ENCODE measurements at regions of chr3 and their contacts with region 1.

Region 1: GRCh38 chr3:161274719-161275298 is 53.7 kb downstream of the NMD3 start:
- DNase-seq: peak; percentile 66
- H3K4me3 Mint-ChIP-seq: no peak overlapping the region
- H3K27ac Mint-ChIP-seq: no peak overlapping the region
- H3K4me1 Mint-ChIP-seq: no peaks in the 10 kb centered on the region
- H3K27me3 Mint-ChIP-seq: no peaks in the 10 kb centered on the region

Region 2: DNA sequence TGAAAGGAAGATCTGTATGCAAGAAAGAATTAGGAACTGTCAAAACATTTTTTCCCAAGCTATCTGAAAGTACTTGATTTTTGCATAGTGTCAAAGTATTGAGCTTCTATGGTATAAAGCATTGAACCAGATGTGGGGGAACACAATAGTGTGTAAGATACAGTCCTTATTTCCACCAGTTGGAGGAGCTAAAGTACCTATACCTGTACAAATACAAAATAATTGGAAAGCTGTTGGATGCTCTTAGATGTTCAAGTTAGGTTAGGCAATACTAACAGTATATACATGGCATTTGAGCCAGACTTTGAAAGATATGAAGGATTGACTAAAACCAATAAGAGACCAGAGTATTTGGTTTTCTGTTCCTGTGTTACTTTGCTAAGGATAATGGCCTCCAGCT is 318.0 kb before region 1 on chr3:
- CTCF ChIA-PET with region 1: interaction called, 6 read pairs
- intact Hi-C with region 1: loop called (anchors 1 kb)
- DNase-seq: no peak
- H3K4me3 Mint-ChIP-seq: no peak overlapping the region
- H3K27ac Mint-ChIP-seq: no peak overlapping the region
- H3K4me1 Mint-ChIP-seq: no peaks in the 10 kb centered on the region
- H3K27me3 Mint-ChIP-seq: no peaks in the 10 kb centered on the region

Region 3: GRCh38 chr3:161284989-161285388 is 10.2 kb after region 1 on chr3:
- CTCF ChIA-PET with region 1: interaction called, 11 read pairs
- intact Hi-C with region 1: no loop called
- DNase-seq: no peak
- H3K4me3 Mint-ChIP-seq: no peak overlapping the region
- H3K27ac Mint-ChIP-seq: no peak overlapping the region
- H3K4me1 Mint-ChIP-seq: no peaks in the 10 kb centered on the region
- H3K27me3 Mint-ChIP-seq: no peaks in the 10 kb centered on the region

Region 4: GRCh38 chr3:161409069-161409468 is 134.3 kb after region 1 on chr3:
- CTCF ChIA-PET with region 1: interaction called, 18 read pairs
- intact Hi-C with region 1: loop called (anchors 1 kb)
- DNase-seq: peak; percentile 63
- H3K4me3 Mint-ChIP-seq: no peak overlapping the region
- H3K27ac Mint-ChIP-seq: no peak overlapping the region
- H3K4me1 Mint-ChIP-seq: peaks cover 20% of the 10 kb centered on the region
- H3K27me3 Mint-ChIP-seq: no peaks in the 10 kb centered on the region

Measured in activated naive CD4-positive, alpha-beta T cell treated with anti-CD3 and anti-CD28 coated beads for 36 hours (primary cell).